MCF 10A (cell line): ENCODE measurements at regions of chr14 and their contacts with region 1.

Region 1: DNA sequence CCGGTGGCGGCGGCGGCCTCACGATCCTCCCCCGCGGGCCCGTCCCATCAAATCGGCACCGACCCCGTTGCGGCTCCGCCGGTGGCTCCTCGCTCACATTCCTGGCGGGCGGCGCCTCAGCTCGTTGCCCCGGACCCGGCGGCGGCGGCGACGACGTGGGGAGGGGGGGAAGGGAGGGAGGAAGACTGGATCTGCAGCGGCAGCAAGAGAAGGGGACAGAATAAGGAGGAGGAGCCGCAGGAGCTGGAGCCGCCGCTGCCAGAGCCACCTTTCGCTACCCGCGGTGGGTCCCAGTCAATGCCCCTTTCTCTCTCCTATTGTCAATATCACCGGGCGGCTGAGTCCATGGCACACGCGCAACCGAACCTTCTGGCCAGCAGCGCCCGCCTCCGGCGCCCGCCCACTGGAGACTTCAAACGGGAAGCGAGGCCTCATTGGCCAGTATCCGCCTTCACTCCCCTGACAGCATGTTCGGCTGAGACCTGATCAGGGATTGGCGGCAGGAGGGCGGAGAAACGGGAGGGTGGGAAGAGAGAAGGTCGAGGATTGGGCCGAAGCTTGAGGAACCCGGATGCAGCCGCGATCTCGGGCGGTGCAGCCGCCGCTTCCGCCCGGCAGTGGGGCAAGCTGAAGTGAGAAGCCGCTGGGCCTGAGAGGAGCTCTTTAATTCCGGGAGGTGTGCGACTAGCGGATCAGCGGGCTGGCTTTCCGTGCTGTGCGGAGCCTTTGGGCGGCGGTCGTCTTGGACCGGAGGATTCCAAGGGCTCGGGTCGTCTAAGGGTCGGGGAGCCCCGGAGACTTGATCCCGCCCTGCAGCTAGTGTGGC is at the start of gene PPP2R5E:
- DNase-seq: peak; percentile 99
- H3K4me3 Mint-ChIP-seq: peak within 1 kb of the TSS; percentile 89
- H3K27ac Mint-ChIP-seq: peak within 1 kb of the TSS; percentile 87
- H3K4me1 Mint-ChIP-seq: peaks cover 18% of the 10 kb centered on the region
- H3K27me3 Mint-ChIP-seq: no peaks in the 10 kb centered on the region
- CTCF ChIP-seq: no peak
- total RNA-seq, gene PPP2R5E: 46.4 and 49.7 TPM in 2 replicates

Region 2: GRCh38 chr14:63437953-63438757 is 105.1 kb before region 1 on chr14:
- CTCF ChIA-PET with region 1: no interaction called
- POLR2A ChIA-PET with region 1: interaction called, 34 read pairs
- intact Hi-C with region 1: loop called (anchors 1 kb)
- DNase-seq: peak; percentile 99
- H3K4me3 Mint-ChIP-seq: peak overlapping the region; percentile 66
- H3K27ac Mint-ChIP-seq: peak overlapping the region; percentile 95
- H3K4me1 Mint-ChIP-seq: peaks cover 32% of the 10 kb centered on the region
- H3K27me3 Mint-ChIP-seq: no peaks in the 10 kb centered on the region
- CTCF ChIP-seq: no peak

Region 3: DNA sequence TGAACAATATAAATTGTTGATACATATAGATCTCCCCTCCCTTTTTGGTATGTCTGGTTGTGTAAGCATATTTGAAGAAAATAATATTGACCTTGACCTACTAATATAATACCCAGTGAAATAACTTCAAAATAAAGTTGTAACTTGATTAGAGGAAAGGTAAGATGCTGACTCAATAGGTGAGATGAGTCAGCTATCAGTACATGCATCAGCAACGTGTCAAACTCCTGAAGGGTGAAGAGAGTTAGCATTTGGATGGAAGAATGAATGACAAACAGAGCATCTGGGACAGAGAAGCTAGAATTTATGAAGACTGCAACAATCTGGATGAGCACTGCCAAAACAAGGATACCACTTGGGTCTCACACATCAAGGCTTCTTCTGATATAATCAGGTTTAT is 74.9 kb before region 1 on chr14:
- CTCF ChIA-PET with region 1: interaction called, 3 read pairs
- POLR2A ChIA-PET with region 1: interaction called, 11 read pairs
- intact Hi-C with region 1: no loop called
- DNase-seq: peak; percentile 58
- H3K4me3 Mint-ChIP-seq: no peak overlapping the region
- H3K27ac Mint-ChIP-seq: no peak overlapping the region
- H3K4me1 Mint-ChIP-seq: peaks cover 26% of the 10 kb centered on the region
- H3K27me3 Mint-ChIP-seq: no peaks in the 10 kb centered on the region
- CTCF ChIP-seq: no peak

Region 4: DNA sequence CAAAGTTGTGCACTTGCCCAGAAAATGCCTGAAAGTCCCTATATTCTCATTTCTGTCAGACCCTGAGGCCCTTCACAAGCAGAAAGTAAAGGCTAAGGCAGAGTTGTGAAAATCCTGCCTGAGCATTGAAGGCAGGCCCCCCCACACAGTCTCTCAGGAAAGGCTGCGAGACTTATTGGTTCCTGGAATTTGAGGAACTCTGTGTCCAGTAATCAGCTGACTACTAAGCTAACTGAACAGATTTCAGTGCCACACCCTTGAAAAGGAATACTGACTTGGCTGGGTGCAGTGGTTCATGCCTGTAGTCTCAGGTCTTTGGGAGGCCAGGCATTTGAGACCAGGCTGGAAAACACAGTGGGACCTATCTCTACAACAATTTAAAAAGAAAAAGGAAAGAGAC is 21.1 kb after region 1 on chr14:
- CTCF ChIA-PET with region 1: interaction called, 3 read pairs
- POLR2A ChIA-PET with region 1: interaction called, 30 read pairs
- intact Hi-C with region 1: no loop called
- DNase-seq: no peak
- H3K4me3 Mint-ChIP-seq: peak overlapping the region; percentile 11
- H3K27ac Mint-ChIP-seq: peak overlapping the region; percentile 64
- H3K4me1 Mint-ChIP-seq: peaks cover 19% of the 10 kb centered on the region
- H3K27me3 Mint-ChIP-seq: no peaks in the 10 kb centered on the region
- CTCF ChIP-seq: no peak

Region 5: GRCh38 chr14:63594455-63595372 is 51.5 kb after region 1 on chr14:
- CTCF ChIA-PET with region 1: no interaction called
- POLR2A ChIA-PET with region 1: no interaction called
- intact Hi-C with region 1: no loop called
- DNase-seq: no peak
- H3K4me3 Mint-ChIP-seq: no peak overlapping the region
- H3K27ac Mint-ChIP-seq: no peak overlapping the region
- H3K4me1 Mint-ChIP-seq: no peaks in the 10 kb centered on the region
- H3K27me3 Mint-ChIP-seq: no peaks in the 10 kb centered on the region
- CTCF ChIP-seq: no peak

Region 6: DNA sequence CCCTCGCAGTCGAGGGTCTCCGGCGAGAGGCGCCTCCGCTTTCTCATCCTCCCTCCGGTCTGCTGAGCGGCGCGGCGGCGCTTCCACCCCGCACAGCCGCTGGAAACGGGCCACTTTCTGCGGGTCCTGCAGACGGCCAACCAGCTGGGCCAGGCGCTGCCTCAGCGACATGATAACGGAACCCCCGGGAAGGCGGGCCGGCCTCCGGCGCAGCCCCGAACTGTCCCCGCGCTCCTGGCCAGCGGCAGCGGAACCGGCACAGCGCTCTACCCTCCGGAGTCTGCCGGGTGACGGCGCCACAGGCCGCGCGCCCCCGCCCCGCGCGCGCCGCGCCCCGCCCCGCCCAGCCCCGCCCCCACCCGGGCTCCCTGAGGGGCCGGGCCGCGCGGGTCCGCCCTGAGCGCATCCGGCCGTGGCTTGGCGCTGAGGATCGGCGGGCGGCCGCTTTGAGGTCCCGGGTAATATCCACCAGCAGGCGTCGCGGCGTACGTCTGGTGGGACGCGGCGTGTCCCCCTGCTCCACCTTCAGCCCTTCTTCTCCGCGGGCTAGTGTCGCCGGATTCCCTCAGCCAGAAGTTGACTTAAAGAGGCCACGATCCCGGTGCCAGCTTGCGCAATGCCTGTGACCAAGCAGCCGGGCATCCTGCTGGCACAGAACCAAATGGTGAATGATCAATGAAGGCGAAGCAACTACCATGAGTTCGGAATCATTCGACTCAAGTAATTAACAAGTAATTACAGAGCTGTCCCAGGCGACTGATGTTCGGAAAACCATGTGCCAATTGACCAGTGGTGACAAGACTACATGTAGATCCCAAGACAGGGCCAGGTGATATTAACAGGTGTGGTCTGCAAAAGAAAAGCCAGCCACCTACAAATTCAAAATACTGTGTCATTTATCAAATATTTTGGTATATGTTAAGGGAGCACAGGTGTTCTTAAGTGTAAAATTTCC is 184.8 kb after region 1 on chr14 and contains the start of gene SGPP1:
- CTCF ChIA-PET with region 1: no interaction called
- POLR2A ChIA-PET with region 1: interaction called, 3 read pairs
- intact Hi-C with region 1: loop called (anchors 1 kb)
- DNase-seq: peak; percentile 76
- H3K4me3 Mint-ChIP-seq: peak within 1 kb of the TSS; percentile 99
- H3K27ac Mint-ChIP-seq: peak within 1 kb of the TSS; percentile 93
- H3K4me1 Mint-ChIP-seq: peaks cover 23% of the 10 kb centered on the region
- H3K27me3 Mint-ChIP-seq: no peaks in the 10 kb centered on the region
- CTCF ChIP-seq: peak; percentile 31
- total RNA-seq, gene SGPP1: 20.8 and 22.7 TPM in 2 replicates